ENCODE measurements at regions of chr1 and their contacts with region 1.

Region 1: GRCh38 chr1:210568631-210569030 is 239.9 kb downstream of the HHAT start:
- DNase-seq: no peak
- H3K4me3 ChIP-seq: no peak overlapping the region
- H3K27ac ChIP-seq: no peak overlapping the region
- H3K4me1 ChIP-seq: no peaks in the 10 kb centered on the region
- H3K27me3 ChIP-seq: no peaks in the 10 kb centered on the region
- CTCF ChIP-seq: no peak

Region 2: DNA sequence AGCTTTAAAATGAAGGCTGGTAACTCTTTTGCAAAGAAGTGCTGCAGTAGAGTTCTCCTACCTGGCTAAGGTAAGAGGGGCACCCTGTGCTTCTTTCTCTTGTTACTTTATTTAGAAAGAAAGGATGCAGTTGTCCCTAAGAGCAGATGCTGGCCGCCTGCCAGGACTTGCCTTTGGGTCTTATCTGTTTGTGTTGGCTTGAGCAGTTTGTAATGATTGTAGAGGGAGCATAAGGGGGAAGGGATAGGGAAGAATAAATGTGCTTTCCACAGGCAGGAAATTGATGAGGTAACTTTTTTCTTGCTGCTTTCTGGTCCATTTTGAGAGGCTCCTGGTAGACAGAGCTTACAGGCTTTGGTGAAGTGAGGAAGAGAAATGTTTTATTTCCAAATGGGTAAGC is 10.3 kb before region 1 on chr1:
- CTCF ChIA-PET with region 1: no interaction called
- POLR2A ChIA-PET with region 1: interaction called, 11 read pairs
- intact Hi-C with region 1: no loop called
- DNase-seq: no peak
- H3K4me3 ChIP-seq: no peak overlapping the region
- H3K27ac ChIP-seq: no peak overlapping the region
- H3K4me1 ChIP-seq: no peaks in the 10 kb centered on the region
- H3K27me3 ChIP-seq: 0 out of 2 replicates have a peak, but pooled peaks cover 2% of the 10 kb centered on the region
- CTCF ChIP-seq: no peak

Region 3: GRCh38 chr1:210663730-210664573 is 95.3 kb after region 1 on chr1:
- CTCF ChIA-PET with region 1: no interaction called
- POLR2A ChIA-PET with region 1: no interaction called
- intact Hi-C with region 1: no loop called
- DNase-seq: no peak
- H3K4me3 ChIP-seq: no peak overlapping the region
- H3K27ac ChIP-seq: no peak overlapping the region
- H3K4me1 ChIP-seq: no peaks in the 10 kb centered on the region
- H3K27me3 ChIP-seq: 0 out of 2 replicates have a peak, but pooled peaks cover 5% of the 10 kb centered on the region
- CTCF ChIP-seq: no peak

Measured in PC-9 (cell line).